Activated CD8-positive, alpha-beta T cell treated with anti-CD3 and anti-CD28 coated beads, Interleukin-2, amount 10 ng/mL, durations not matched to agents 7 days and 5 days (primary cell): ENCODE measurements at regions of chr7 and their contacts with region 1.

Region 1: DNA sequence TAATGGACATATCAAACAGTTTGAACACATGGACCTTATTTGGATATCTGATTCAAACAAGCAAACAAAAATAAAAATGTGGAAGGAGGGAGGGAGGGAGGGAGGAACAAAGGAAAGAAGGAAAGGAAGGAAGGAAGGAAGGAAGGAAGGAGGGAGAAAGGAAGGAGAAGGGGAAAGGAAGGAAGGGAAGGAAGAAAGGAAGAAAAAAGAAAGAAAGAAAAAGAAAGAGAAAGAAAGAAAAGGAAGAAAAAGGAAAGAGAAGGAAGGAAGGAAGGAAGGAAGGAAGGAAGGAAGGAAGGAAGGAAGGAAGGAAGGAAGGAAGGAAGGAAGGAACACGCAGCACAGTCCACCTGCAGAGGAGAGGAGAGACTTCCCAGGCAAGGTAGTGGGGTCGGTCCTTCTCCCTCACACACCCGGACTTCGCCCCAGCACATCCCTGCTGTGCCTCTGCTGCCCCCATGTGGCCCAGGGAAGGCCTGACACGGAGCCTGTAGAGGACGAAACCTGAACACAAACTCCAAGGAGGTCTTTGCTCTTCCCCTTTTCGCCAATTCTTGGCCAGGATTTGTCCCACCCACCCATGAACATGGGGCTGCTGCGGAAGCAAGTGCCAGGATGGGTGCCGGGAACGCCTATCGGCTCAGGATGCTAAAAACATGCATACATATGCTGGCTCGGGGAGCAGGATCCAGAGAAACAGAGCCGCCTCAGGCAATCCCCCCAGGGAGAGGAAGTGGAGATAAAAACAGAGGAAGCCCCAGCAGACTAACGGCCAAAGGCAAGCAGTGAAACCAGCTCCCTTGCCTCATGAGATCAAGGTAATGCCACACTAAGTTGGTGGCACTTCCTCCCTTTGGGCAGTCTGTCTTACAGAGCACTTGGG is 52.3 kb upstream of the DGKI start:
- DNase-seq: peak; percentile 84
- ATAC-seq: peak; percentile 95
- H3K4me3 Mint-ChIP-seq: peak overlapping the region; percentile 50
- H3K27ac Mint-ChIP-seq: peak overlapping the region; percentile 80
- H3K4me1 Mint-ChIP-seq: peaks cover 33% of the 10 kb centered on the region
- H3K27me3 Mint-ChIP-seq: no peaks in the 10 kb centered on the region

Region 2: GRCh38 chr7:137656227-137656849 is 242.7 kb before region 1 on chr7:
- CTCF ChIA-PET with region 1: interaction called, 28 read pairs
- POLR2A ChIA-PET with region 1: no interaction called
- DNase-seq: peak; percentile 77
- ATAC-seq: peak; percentile 63
- H3K4me3 Mint-ChIP-seq: no peak overlapping the region
- H3K27ac Mint-ChIP-seq: no peak overlapping the region
- H3K4me1 Mint-ChIP-seq: no peaks in the 10 kb centered on the region
- H3K27me3 Mint-ChIP-seq: peaks cover 7% of the 10 kb centered on the region

Region 3: GRCh38 chr7:137916980-137917645 is 18.0 kb after region 1 on chr7:
- CTCF ChIA-PET with region 1: interaction called, 22 read pairs
- POLR2A ChIA-PET with region 1: no interaction called
- DNase-seq: no peak
- ATAC-seq: no peak
- H3K4me3 Mint-ChIP-seq: no peak overlapping the region
- H3K27ac Mint-ChIP-seq: no peak overlapping the region
- H3K4me1 Mint-ChIP-seq: peaks cover 15% of the 10 kb centered on the region
- H3K27me3 Mint-ChIP-seq: no peaks in the 10 kb centered on the region

Region 4: DNA sequence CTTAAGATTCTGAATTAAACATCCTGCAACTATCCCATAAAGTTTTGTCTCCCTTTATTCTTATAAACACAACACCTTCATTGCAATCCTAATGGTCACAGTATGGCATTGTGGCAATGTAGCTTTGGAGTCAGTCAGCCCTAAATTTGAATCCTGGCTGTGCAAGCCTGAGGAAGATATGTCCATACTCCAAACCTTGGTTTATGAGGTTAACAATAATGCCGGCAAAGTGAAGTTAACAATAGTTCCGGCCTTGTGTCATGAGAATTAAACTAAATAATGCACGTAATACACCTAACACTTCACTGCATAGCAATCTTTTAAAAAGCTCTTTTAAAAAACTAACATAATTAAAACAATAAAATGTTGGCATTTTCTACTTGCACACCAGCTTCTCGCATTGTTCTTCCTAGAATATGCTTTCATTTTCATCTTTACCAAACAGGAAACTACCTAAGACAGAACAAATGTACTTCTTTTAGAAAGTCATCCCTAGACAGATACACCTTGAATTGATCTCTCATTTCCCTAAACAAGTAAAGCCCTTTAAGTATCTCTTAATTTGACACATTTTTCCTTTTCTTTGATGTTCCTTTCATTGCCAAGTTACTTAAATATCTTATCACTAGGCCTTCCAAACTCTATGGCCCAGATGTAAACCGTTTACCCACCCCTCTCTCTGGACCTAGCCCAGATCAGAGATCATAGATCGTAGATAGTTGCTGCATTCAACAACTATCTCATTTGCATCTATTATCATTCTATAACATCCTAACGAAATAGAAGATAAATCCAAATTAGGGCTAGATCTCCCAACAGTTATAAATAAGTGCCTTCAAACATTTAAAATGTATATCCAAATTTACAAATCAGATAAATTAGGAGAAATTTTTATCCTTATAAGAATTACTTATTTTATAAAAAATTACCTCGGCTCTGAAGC is 36.1 kb after region 1 on chr7:
- CTCF ChIA-PET with region 1: interaction called, 18 read pairs
- POLR2A ChIA-PET with region 1: no interaction called
- DNase-seq: no peak
- ATAC-seq: peak; percentile 84
- H3K4me3 Mint-ChIP-seq: peak overlapping the region; percentile 80
- H3K27ac Mint-ChIP-seq: peak overlapping the region; percentile 92
- H3K4me1 Mint-ChIP-seq: peaks cover 34% of the 10 kb centered on the region
- H3K27me3 Mint-ChIP-seq: no peaks in the 10 kb centered on the region

Region 5: DNA sequence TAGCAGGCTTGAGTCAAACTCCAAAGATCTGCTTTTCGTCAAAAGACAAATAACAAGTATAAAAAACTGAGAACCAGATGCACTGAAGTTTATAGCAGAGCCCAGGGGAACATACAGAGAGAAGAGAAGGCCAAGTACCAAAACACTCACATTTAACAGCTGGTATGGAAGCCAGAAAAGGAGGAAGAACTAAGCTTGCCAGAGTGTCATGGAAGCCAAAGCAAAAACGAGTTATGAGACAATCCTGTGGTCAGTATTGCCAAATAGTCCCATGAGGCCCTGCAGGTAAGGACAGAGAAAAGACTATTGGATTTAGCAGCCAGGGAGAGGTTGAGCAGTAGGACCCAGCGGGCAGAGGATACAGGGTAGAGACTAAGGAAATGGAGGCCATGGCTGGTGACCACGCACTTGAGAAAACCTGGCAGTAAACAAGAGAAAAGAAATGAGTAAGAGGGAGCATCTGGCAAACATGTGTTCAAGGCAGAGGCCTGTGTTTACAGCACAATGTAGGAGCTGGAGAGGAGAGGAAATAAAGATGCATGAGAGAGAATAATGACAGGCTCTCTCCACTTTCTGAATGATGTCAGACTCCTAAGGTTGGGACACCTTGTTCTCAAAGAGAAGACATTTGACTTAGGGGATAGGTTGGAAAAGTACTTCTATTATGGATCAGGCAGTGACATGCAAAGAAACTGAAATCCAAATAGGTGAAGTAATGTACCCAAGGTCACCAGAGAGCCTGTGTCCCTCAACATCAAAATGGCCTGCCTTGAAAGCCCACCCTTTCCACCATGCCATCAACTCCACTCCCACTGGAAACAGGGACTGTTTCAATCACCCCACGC is 93.7 kb after region 1 on chr7:
- CTCF ChIA-PET with region 1: interaction called, 23 read pairs
- POLR2A ChIA-PET with region 1: no interaction called
- DNase-seq: no peak
- ATAC-seq: no peak
- H3K4me3 Mint-ChIP-seq: no peak overlapping the region
- H3K27ac Mint-ChIP-seq: peak overlapping the region; percentile 10
- H3K4me1 Mint-ChIP-seq: peaks cover 29% of the 10 kb centered on the region
- H3K27me3 Mint-ChIP-seq: no peaks in the 10 kb centered on the region

Region 6: GRCh38 chr7:138015096-138015495 is 116.0 kb after region 1 on chr7:
- CTCF ChIA-PET with region 1: interaction called, 348 read pairs
- POLR2A ChIA-PET with region 1: no interaction called
- DNase-seq: no peak
- ATAC-seq: no peak
- H3K4me3 Mint-ChIP-seq: no peak overlapping the region
- H3K27ac Mint-ChIP-seq: no peak overlapping the region
- H3K4me1 Mint-ChIP-seq: no peaks in the 10 kb centered on the region
- H3K27me3 Mint-ChIP-seq: peaks cover 5% of the 10 kb centered on the region